ENCODE measurements at regions of chr3 and their contacts with region 1.

Region 1: DNA sequence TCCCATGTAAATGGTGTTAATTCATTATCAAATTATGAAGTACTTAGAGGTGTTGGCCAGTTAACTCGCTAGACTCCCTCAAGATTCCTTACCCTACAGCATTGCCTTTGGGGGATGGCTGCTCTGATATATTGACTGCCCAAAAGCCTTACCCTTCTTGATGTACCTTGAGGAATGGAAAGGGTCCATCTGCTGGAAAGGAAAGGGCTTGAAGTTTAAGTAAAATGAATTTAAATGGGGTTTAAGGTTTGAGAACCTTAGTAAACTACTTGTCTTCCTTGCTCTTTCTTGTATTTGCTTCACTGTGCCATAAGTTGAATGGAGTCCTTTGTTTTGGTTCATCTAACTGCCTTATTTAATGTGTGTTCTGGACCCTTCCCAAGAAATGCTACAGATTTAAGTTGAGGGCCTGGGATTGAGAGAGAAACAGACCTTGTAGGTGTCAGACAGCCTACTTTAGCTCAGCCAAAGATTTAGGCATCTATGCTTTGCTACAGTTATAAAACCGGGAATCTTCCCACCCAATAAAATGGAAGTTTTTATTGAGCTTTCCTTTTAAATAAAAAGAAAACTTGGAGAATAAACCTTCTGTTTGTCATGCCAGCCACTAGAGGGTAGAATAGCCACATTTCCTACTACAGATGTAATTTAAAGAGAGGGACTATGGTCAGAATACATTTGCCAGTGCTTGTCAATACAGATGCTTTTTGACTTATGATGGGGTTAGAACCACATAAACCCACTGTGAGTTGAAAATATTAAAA is 25.3 kb downstream of the CMSS1 start:
- DNase-seq: no peak
- H3K4me3 ChIP-seq: no peak overlapping the region
- H3K27ac ChIP-seq: no peak overlapping the region
- H3K27me3 ChIP-seq: no peaks in the 10 kb centered on the region
- CTCF ChIP-seq: peak; percentile 76

Region 2: GRCh38 chr3:99970198-99970597 is 127.2 kb after region 1 on chr3:
- CTCF ChIA-PET with region 1: no interaction called
- POLR2A ChIA-PET with region 1: no interaction called
- DNase-seq: no peak
- H3K4me3 ChIP-seq: no peak overlapping the region
- H3K27ac ChIP-seq: no peak overlapping the region
- H3K27me3 ChIP-seq: no peaks in the 10 kb centered on the region
- CTCF ChIP-seq: no peak

Region 3: DNA sequence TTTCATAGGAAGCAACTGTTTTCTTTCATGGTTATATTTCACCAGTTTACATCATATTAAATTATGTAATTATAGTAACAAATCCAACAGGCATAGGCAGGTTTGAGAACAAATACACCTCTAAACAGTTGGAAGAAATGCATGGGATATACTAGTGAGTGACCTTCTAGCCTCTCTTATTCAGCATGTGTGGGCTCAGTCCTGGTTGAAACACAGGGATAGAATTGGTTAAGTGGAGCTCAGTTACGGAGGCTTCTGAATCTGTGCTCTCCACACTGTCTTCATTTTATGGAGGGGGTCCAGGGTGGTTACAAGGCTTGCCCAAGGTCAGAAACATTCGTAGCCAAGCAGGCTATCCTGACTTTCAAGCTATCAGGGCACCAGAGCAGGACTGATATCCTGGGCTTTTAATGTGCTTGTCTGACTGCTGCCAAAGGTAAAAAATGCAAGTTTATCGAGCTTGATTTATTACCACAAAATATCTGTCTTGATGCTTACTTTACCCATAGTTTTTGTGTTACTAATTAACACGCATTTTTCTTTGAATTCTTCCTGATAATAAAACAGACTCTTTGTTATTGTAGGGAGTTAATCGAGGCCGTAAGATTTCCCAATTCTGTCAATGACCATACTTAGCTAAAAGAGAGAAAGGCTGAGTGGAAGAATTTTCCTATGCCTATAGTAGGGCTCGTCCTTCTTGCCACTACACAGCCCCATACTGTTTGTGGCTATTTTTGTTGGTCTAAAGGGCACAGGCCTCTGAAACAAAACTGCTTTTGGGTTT is 181.7 kb after region 1 on chr3:
- CTCF ChIA-PET with region 1: interaction called, 10 read pairs
- POLR2A ChIA-PET with region 1: no interaction called
- DNase-seq: no peak
- H3K4me3 ChIP-seq: no peak overlapping the region
- H3K27ac ChIP-seq: no peak overlapping the region
- H3K27me3 ChIP-seq: no peaks in the 10 kb centered on the region
- CTCF ChIP-seq: no peak

Region 4: GRCh38 chr3:100089812-100090668 is 247.0 kb after region 1 on chr3:
- CTCF ChIA-PET with region 1: interaction called, 20 read pairs
- POLR2A ChIA-PET with region 1: no interaction called
- DNase-seq: peak; percentile 27
- H3K4me3 ChIP-seq: no peak overlapping the region
- H3K27ac ChIP-seq: peak overlapping the region; percentile 33
- H3K27me3 ChIP-seq: no peaks in the 10 kb centered on the region
- CTCF ChIP-seq: peak; percentile 77

Region 5: DNA sequence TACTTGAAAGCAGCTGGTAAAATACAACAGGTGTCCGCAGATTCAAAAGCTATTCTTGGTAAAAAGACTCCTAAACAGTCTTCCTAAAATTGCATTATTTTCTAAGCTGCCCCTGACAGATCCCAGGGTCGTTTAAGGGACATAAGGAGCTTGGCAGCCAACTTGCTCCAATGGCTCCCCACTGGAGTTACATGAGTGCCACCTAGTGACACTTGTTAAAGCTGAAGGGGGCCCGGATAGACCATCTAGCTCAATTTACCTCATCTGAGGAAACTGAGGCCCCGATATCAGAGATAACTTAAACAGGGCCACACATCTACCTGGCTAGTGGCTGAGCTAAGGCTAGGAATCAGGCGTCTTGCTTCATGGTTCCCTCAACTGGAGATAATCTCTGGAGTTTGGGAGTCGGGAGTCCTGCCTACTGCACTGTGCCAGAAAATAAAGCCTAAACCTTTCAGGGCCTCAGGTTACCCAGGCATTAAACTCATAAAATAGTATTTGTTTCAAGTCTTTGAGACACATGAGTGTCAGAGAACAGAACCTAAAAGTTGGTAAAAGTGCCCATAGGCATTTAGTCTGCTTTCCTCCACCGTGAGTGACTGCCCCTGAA is 411.3 kb after region 1 on chr3:
- CTCF ChIA-PET with region 1: interaction called, 56 read pairs
- POLR2A ChIA-PET with region 1: no interaction called
- DNase-seq: peak; percentile 59
- H3K4me3 ChIP-seq: no peak overlapping the region
- H3K27ac ChIP-seq: no peak overlapping the region
- H3K27me3 ChIP-seq: no peaks in the 10 kb centered on the region
- CTCF ChIP-seq: peak; percentile 81